AG04449 (cell line): ENCODE measurements at regions of chr11 and their contacts with region 1.

Region 1: DNA sequence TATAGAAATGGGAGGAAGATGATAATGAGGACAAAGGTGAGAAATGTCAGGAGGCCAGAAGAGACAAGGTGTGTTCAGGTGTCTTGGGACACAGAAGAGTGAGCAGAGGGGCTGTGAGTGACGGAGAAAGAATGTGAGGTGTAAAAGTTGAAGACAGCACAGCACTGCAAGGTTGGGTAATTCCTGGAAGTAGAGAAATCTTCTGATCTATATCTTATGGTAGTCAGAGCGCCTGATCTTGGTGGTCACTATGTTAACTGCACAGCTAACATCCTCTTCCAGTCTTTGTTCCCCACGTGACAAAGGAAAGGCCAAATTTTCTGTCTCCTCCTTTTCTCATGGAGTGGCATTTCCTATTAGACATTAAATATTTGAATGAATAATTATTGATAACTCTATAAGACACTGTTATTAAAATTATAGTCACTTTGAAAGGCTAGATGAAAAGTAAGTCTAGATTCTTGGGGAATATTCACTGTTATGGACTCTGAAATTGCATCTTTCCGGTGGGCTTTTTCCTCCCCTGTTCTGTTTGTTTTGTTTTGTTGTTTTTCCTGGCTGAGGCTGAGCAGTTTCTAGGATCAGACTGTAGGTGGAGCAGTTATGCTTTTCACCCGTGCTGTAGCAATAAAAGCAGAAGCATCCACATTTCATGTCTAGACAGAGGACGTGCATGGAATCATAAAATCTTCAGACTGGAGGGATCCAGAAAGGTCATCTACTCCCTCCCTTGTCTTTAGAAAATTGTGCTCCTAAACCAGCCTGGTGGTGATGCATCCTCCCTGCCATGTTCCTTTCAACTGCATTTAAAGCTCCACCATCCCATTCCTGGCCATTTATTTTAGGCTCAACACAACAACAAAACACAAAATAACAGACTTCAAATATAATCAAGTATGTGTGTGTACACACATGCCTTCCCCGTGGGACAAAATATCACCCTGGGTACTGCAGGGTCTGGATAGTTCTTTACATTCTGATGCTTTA is 26.6 kb downstream of the SC5D start:
- DNase-seq: peak; percentile 10
- H3K4me3 ChIP-seq: no peak overlapping the region
- CTCF ChIP-seq: peak; percentile 71

Region 2: GRCh38 chr11:121534131-121535093 is 215.3 kb after region 1 on chr11:
- CTCF ChIA-PET with region 1: interaction called, 35 read pairs
- POLR2A ChIA-PET with region 1: no interaction called
- DNase-seq: no peak
- H3K4me3 ChIP-seq: no peak overlapping the region
- CTCF ChIP-seq: peak; percentile 59